ENCODE measurements at regions of chr19 and their contacts with region 1.

Region 1: DNA sequence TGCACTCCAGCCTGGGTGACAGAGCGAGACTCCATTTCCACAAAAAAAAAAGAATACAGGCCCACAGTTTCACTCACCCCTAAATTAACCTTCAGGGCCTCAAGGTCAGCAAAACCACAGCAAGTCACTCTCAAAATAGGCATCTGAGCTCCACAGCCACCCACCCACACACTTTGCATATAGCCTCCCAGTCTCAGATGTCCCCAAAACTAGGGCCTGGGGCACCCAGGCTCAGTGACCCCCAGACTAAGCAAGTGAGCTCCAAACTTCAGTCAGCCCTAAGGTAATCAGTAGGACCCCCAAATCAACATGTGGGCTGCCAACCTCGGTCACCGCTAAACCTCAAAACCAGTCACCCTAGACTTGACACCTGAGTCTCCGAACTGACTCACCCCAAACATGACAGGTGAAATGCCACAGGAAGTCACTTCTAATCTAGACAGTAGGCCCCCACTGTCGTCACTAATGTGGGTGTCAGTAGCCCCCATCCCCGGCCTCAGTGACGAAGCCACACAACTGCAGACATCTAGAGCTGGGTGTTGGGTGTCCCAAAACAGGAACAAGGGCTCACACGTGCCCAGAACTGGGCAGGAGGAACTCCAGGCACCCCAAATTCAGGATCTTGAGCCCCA is 13.9 kb downstream of the RABAC1 start:
- DNase-seq: peak; percentile 97
- H3K4me3 ChIP-seq: peak overlapping the region; percentile 49
- H3K27ac ChIP-seq: peak overlapping the region; percentile 96
- H3K4me1 ChIP-seq: peaks cover 90% of the 10 kb centered on the region
- CTCF ChIP-seq: no peak

Region 2: DNA sequence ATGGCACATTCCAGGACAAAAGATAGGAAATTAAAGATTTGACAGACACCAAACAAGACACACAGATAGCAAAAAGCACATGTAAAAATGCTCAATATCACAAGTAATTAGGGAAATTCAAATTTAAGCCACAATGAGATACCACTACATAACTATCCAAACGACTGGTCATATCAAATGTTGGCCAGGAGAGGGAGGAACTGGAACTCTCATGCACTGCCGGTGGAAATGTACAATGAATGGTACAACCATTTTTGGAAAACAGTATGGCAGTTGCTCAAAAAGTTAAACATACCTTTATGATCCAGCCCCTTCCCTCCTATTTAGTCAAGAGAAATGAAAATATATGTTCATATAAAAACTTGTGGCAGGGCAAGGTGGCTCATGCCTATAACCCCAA is 789.0 kb before region 1 on chr19:
- CTCF ChIA-PET with region 1: no interaction called
- POLR2A ChIA-PET with region 1: no interaction called
- intact Hi-C with region 1: no loop called
- DNase-seq: no peak
- H3K4me3 ChIP-seq: no peak overlapping the region
- H3K27ac ChIP-seq: no peak overlapping the region
- H3K4me1 ChIP-seq: no peaks in the 10 kb centered on the region
- CTCF ChIP-seq: no peak

Region 3: DNA sequence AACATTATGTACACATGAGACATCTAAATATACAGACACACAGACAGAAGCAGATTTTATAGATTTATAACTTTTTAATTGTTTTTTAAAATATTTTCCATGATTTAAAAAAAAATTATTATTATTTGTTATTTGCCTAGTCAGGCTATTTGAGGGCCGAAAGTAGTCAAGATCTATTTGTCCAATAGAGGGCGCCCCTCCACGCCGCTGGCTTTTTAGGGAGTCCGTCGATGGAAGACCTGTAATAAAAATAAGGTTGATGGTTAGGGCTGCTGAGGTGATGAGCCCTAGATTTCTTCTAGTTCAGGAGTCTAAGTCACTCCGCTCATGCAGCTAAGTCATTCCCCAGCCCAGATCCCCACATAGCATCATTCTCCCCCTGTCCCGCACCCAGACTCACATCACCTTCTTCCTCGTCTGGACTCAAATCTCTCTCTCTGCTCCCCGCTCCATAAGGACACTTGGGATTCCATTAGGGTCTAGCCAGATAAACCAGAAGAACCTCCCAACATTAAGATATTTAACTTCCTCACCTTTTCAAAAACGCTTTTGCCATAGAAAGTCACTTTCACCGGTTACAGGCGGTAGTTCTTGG is 403.2 kb before region 1 on chr19:
- CTCF ChIA-PET with region 1: no interaction called
- POLR2A ChIA-PET with region 1: interaction called, 4 read pairs
- intact Hi-C with region 1: loop called (anchors 10 kb)
- DNase-seq: peak; percentile 81
- H3K4me3 ChIP-seq: no peak overlapping the region
- H3K27ac ChIP-seq: no peak overlapping the region
- H3K4me1 ChIP-seq: peaks cover 64% of the 10 kb centered on the region
- CTCF ChIP-seq: peak; percentile 90

Region 4: GRCh38 chr19:41657157-41657556 is 288.1 kb before region 1 on chr19:
- CTCF ChIA-PET with region 1: no interaction called
- POLR2A ChIA-PET with region 1: no interaction called
- intact Hi-C with region 1: no loop called
- DNase-seq: no peak
- H3K4me3 ChIP-seq: no peak overlapping the region
- H3K27ac ChIP-seq: no peak overlapping the region
- H3K4me1 ChIP-seq: no peaks in the 10 kb centered on the region
- CTCF ChIP-seq: no peak

Region 5: GRCh38 chr19:41859618-41860418 is 85.4 kb before region 1 on chr19 and contains the start of gene RPS19:
- CTCF ChIA-PET with region 1: no interaction called
- POLR2A ChIA-PET with region 1: interaction called, 12 read pairs
- intact Hi-C with region 1: no loop called
- DNase-seq: peak; percentile 98
- H3K4me3 ChIP-seq: peak within 1 kb of the TSS; percentile 96
- H3K27ac ChIP-seq: peak within 1 kb of the TSS; percentile 85
- H3K4me1 ChIP-seq: peaks cover 61% of the 10 kb centered on the region
- CTCF ChIP-seq: peak; percentile 54; the same call in 1 of the 2 replicates
- total RNA-seq, gene RPS19: 4,018 and 4,414 TPM in 2 replicates

Region 6: GRCh38 chr19:41872775-41873647 is 72.2 kb before region 1 on chr19:
- CTCF ChIA-PET with region 1: interaction called, 3 read pairs
- POLR2A ChIA-PET with region 1: interaction called, 11 read pairs
- intact Hi-C with region 1: loop called (anchors 2 kb)
- DNase-seq: peak; percentile 77
- H3K4me3 ChIP-seq: no peak overlapping the region
- H3K27ac ChIP-seq: peak overlapping the region; percentile 100
- H3K4me1 ChIP-seq: peaks cover 88% of the 10 kb centered on the region
- CTCF ChIP-seq: peak; percentile 94

Region 7: GRCh38 chr19:41928221-41928683 is 17.0 kb before region 1 on chr19 and contains the start of gene ERFL:
- CTCF ChIA-PET with region 1: interaction called, 6 read pairs
- POLR2A ChIA-PET with region 1: interaction called, 13 read pairs
- intact Hi-C with region 1: loop called (anchors 2 kb)
- DNase-seq: peak; percentile 63
- H3K4me3 ChIP-seq: peak within 1 kb of the TSS; percentile 72
- H3K27ac ChIP-seq: peak within 1 kb of the TSS; percentile 56
- H3K4me1 ChIP-seq: peaks cover 63% of the 10 kb centered on the region
- CTCF ChIP-seq: peak; percentile 53
- total RNA-seq, gene ERFL: 1.6 and 1.9 TPM in 2 replicates

Region 8: DNA sequence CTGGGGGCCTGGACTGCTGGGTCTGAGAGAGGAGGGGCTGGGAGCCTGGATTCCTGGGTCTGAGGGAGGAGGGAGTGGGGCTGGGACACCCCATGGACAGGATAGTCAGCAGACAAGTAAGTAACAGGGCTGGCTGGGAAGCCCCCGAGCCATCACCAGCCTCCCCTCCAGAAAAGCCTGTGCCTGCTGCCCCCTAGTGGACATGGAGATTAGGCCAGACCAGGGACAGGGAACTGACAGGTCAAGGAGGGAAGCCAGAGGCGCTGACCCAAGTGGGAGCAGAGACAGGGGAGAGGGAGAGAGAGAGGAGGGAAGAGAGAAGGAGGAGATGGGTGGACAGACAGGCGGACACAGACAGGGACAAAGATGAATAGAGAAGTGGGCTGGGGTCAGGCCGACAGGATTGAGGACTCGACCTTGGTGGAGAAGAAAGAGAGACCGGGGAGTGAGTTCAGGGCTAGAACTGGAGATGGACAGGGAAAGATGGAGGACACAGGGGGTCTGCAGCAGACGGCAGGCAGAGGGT is 10.3 kb before region 1 on chr19:
- CTCF ChIA-PET with region 1: interaction called, 6 read pairs
- POLR2A ChIA-PET with region 1: interaction called, 21 read pairs
- intact Hi-C with region 1: loop called (anchors 1 kb)
- DNase-seq: peak; percentile 85
- H3K4me3 ChIP-seq: no peak overlapping the region
- H3K27ac ChIP-seq: peak overlapping the region; percentile 62
- H3K4me1 ChIP-seq: peaks cover 87% of the 10 kb centered on the region
- CTCF ChIP-seq: peak; percentile 97